ENCODE measurements at regions of chr2 and their contacts with region 1.

Region 1: GRCh38 chr2:180980106-180980942 is at the start of gene UBE2E3:
- DNase-seq: peak; percentile 70 to 94
- H3K4me3 ChIP-seq: peak within 1 kb of the TSS; percentile 76
- H3K27ac ChIP-seq: peak within 1 kb of the TSS; percentile 86
- H3K4me1 ChIP-seq: peaks cover 46% of the 10 kb centered on the region
- H3K27me3 ChIP-seq: no peaks in the 10 kb centered on the region
- CTCF ChIP-seq: peak; percentile 84
- total RNA-seq, gene UBE2E3: 139 and 180 TPM in 2 replicates

Region 2: DNA sequence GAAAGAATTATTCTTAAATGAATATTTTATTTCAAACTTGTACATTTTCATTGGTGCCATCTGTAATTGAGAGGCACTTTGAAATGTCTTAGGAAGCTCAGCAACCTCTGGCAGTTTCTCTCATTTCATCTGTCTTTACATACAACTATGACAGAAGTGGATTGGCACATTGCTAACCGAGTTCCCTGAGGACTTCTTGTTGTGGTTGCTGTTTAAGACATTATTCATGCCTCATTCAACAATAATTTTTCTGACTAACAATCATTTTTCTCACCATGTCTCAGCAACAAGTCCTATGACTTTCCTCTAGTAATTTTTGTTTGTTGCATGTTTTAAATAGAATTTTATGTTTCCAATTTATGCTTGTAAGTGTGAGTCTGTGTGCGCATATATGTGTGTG is 689.3 kb before region 1 on chr2:
- CTCF ChIA-PET with region 1: no interaction called
- POLR2A ChIA-PET with region 1: no interaction called
- intact Hi-C with region 1: loop called (anchors 10 kb)
- DNase-seq: no peak
- H3K4me3 ChIP-seq: no peak overlapping the region
- H3K27ac ChIP-seq: no peak overlapping the region
- H3K4me1 ChIP-seq: peaks cover 17% of the 10 kb centered on the region
- H3K27me3 ChIP-seq: no peaks in the 10 kb centered on the region
- CTCF ChIP-seq: no peak

Region 3: DNA sequence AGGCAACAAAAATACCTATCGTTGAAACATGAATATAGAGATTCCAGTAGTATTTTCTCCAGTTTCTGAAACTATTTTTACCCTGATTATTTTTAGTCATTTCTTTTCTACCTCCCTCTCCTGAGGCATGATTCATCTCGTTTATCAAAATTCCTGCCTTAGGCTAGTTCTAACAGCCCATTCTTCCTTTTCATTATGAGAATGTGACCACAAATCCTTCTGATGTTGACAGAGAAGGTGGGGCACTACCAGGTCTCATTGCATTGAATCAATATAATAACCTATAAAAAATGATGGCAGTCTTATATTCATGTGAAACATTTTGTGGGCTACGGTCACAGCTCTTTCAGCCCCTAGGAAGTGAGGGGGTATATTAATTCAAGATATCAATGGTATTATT is 406.4 kb before region 1 on chr2:
- CTCF ChIA-PET with region 1: no interaction called
- POLR2A ChIA-PET with region 1: interaction called, 4 read pairs
- intact Hi-C with region 1: loop called (anchors 1 kb)
- DNase-seq: peak; percentile 57 to 98
- H3K4me3 ChIP-seq: no peak overlapping the region; the same call in 1 of the 2 replicates
- H3K27ac ChIP-seq: peak overlapping the region; percentile 52
- H3K4me1 ChIP-seq: peaks cover 36% of the 10 kb centered on the region
- H3K27me3 ChIP-seq: no peaks in the 10 kb centered on the region
- CTCF ChIP-seq: no peak

Region 4: GRCh38 chr2:180747728-180748482 is 232.4 kb before region 1 on chr2:
- CTCF ChIA-PET with region 1: no interaction called
- POLR2A ChIA-PET with region 1: no interaction called
- intact Hi-C with region 1: loop called (anchors 1 kb)
- DNase-seq: peak; percentile 67 to 95
- H3K4me3 ChIP-seq: peak overlapping the region; percentile 6; the same call in 1 of the 2 replicates
- H3K27ac ChIP-seq: peak overlapping the region; percentile 49
- H3K4me1 ChIP-seq: peaks cover 26% of the 10 kb centered on the region
- H3K27me3 ChIP-seq: no peaks in the 10 kb centered on the region
- CTCF ChIP-seq: no peak